Dorsolateral prefrontal cortex (tissue), 120 donors: ENCODE measurements at regions of chr2 and their contacts with region 1.

Region 1: GRCh38 chr2:190627448-190628412 is 21.2 kb upstream of the NAB1 start:
- DNase-seq: peak in 9 of 10 donors; percentile 38 to 84 (median 61)
- H3K4me3 ChIP-seq: peak overlapping the region; percentile 40 to 76 (median 60)
- H3K27ac ChIP-seq: peak overlapping the region; percentile 71 to 95 (median 91)
- H3K27me3 ChIP-seq: no peaks in the 10 kb centered on the region
- CTCF ChIP-seq: peak in 3 of 56 donors; percentile 6 to 27 (median 12)

Region 2: DNA sequence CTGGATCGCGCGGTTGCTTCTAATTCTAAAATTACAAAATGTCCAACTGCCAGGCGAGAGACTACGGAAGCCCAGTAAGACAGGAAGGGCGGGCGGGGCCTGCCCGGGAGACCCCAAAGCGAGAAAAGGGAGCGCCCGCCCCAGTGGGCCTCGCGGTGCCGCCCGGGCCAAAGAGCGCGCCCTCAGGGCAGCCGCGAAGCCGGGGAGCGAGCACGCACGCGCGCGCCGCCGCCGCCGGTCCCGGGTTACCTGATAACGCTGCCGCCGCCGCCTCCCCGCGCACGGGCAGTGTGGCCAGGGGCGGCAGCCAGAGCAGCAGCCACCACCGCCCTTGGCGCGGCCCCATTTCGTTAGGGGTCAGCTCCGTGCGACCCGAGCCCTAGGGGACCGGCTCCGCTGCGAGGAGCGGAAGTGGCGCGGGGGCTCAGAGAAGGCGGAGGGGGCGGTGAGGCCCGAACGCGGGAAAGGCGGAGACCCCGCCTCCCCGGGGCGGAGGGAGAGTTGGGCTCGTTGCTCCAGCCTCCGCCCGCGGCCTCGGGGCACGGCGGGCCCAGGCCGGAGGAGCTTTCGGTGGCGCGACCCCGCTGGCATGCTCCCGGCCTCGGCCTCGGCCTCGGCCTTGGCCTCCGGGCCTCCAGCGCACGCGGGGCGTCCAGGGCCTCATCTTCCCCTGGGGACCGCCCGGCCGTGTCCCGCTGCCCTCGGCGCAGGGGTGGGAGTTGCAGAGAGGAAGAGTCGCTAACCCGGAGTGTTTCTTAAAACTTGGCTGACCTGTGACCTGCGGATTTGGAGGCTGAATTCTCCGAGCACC is 93.2 kb before region 1 on chr2 and contains the start of gene NEMP2:
- intact Hi-C with region 1: loop called in 1 of 2 experiments (anchors 5 kb)
- DNase-seq: peak; percentile 55 to 88 (median 66)
- H3K4me3 ChIP-seq: peak within 1 kb of the TSS; percentile 56 to 96 (median 84)
- H3K27ac ChIP-seq: peak within 1 kb of the TSS; percentile 82 to 99 (median 96)
- H3K27me3 ChIP-seq: no peaks in the 10 kb centered on the region
- CTCF ChIP-seq: peak in 25 of 56 donors; percentile 9 to 61 (median 28)
- total RNA-seq, gene NEMP2: 1.1 to 9.4 (median 3.7) TPM

Region 3: GRCh38 chr2:190607014-190607597 is 20.6 kb before region 1 on chr2:
- intact Hi-C with region 1: no loop called
- DNase-seq: no peak
- H3K4me3 ChIP-seq: peak overlapping the region in 2 of 59 donors; percentile 45 to 55
- H3K27ac ChIP-seq: peak overlapping the region in 28 of 59 donors; percentile 12 to 80 (median 56)
- H3K27me3 ChIP-seq: no peaks in the 10 kb centered on the region
- CTCF ChIP-seq: no peak

Region 4: GRCh38 chr2:190781604-190782198 is 154.0 kb after region 1 on chr2:
- intact Hi-C with region 1: no loop called
- DNase-seq: peak in 1 of 10 donors; percentile 36
- H3K4me3 ChIP-seq: no peak overlapping the region
- H3K27ac ChIP-seq: no peak overlapping the region
- H3K27me3 ChIP-seq: peaks cover 0 to 2% (median 0%) of the 10 kb centered on the region in 45 donors
- CTCF ChIP-seq: peak in 55 of 56 donors; percentile 45 to 81 (median 63)